H1 (cell line): ENCODE measurements at regions of chr11 and their contacts with region 1.

Region 1: GRCh38 chr11:1796413-1797011 is 32.8 kb upstream of the CTSD start:
- DNase-seq: no peak
- H3K4me3 ChIP-seq: no peak overlapping the region
- H3K27ac ChIP-seq: no peak overlapping the region
- H3K4me1 ChIP-seq: no peaks in the 10 kb centered on the region
- H3K27me3 ChIP-seq: peaks cover 0 to 3% (median 1%) of the 10 kb centered on the region in 4 experiments; a peak in 2 of 7 replicates
- CTCF ChIP-seq: peak; percentile 36 to 65 (median 51)
- EP300 ChIP-seq: no peak
- POLR2A ChIP-seq: no peak
- RAD21 ChIP-seq: peak in 1 of 2 experiments; percentile 12; a peak in 1 of 4 replicates

Region 2: DNA sequence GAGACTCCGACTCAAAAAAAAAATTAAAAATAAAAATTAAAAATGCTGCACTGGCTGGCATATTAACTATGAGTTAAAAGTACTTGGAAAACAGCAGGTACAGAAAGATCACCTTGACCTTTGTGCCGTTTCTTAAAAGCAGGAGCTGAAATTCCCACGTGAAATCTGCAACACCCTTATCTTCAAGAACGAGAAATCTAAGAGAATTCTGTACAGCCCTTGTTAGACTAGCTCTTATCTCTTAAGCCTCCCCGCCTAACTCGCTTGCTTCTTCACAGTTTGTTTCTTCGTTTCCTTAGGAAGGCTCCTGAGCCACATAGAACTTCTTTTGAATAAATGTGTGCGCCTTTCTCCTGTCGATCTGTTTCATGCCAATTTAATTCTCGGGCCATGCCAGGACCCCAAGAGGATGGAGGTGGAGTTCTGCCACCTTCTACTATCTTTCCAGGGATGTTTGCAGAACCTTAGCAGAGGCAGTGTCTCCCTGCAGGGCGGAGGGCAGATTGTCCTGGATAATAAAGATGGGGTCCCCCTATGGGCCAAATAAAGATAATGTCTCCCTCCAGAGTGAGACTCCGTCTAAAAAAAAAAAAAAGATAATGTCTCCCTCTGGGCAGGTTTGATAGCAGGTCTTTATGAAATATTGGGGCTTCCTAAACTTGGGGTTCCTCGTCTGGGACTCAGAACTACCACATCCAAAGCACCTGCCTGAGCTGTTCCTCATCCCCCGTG is 10.9 kb after region 1 on chr11:
- CTCF ChIA-PET with region 1: interaction called, 26 read pairs
- POLR2A ChIA-PET with region 1: interaction called, 3 read pairs
- DNase-seq: no peak
- H3K4me3 ChIP-seq: no peak overlapping the region
- H3K27ac ChIP-seq: no peak overlapping the region
- H3K4me1 ChIP-seq: 0 out of 7 replicates have a peak, but pooled peaks cover 0 to 3% (median 0%) of the 10 kb centered on the region in 4 experiments
- H3K27me3 ChIP-seq: peaks cover 0 to 2% (median 1%) of the 10 kb centered on the region in 4 experiments; a peak in 2 of 7 replicates
- CTCF ChIP-seq: peak in 2 of 3 experiments; percentile 29 to 41; a peak in 3 of 4 replicates
- EP300 ChIP-seq: no peak
- POLR2A ChIP-seq: no peak
- RAD21 ChIP-seq: peak; percentile 6 to 28; a peak in 1 of 4 replicates

Region 3: GRCh38 chr11:1838426-1839171 is 42.1 kb after region 1 on chr11 and contains the start of gene TNNI2:
- CTCF ChIA-PET with region 1: no interaction called
- POLR2A ChIA-PET with region 1: no interaction called
- DNase-seq: no peak
- H3K4me3 ChIP-seq: no peak within 1 kb of the TSS
- H3K27ac ChIP-seq: no peak within 1 kb of the TSS
- H3K4me1 ChIP-seq: no peaks in the 10 kb centered on the region; a peak in 1 of 7 replicates
- H3K27me3 ChIP-seq: no peaks in the 10 kb centered on the region
- CTCF ChIP-seq: no peak
- EP300 ChIP-seq: no peak
- POLR2A ChIP-seq: no peak
- RAD21 ChIP-seq: no peak
- total RNA-seq, gene TNNI2: not detected in 2 replicates

Region 4: DNA sequence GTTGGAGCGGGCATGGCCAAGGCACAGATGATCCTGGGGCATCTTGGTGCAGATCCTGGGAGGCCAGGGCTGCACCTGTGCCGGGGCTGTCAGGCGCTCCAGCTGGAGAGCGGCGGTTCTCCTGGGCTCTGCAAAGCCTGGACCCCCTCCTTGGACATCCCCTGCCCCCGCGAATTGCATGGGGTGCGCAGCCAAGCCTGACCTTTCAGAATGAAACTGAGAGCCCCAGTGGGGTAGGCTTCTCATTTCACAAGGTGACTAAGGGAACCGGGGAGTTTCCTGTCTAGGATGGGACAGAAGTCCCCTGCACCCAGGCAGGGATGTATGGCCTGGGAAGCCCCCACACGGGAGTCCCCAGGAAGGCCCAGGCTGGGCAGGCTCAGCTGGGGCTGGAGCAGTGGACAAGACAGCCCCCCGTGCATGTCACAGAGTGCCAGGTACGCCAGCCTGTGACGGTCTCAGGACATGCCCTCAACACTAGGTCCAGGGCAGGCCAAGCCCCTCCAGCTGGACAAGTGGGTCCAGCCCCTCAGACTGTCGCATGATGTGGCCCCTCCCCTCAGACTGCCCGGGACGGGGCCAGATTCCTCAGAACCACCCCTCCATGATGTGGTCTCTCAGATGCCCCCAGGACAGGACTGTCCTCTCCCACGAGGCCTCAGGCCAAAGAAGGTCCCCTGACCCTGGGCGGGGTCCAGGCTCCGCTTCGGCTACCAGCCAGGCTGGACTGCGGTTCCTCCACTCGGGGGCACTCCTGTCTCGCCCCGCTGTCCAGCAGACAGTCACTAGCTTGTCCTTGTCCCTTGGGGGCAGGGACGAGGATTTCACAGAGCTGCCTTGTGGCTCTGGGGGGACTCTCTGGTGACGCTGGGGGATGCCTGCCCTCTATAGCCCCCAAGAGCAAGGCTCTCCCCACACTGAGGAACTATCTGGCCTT is 58.7 kb after region 1 on chr11:
- CTCF ChIA-PET with region 1: no interaction called
- POLR2A ChIA-PET with region 1: no interaction called
- DNase-seq: no peak
- H3K4me3 ChIP-seq: no peak overlapping the region
- H3K27ac ChIP-seq: no peak overlapping the region
- H3K4me1 ChIP-seq: 0 out of 7 replicates have a peak, but pooled peaks cover 0 to 3% (median 0%) of the 10 kb centered on the region in 4 experiments
- H3K27me3 ChIP-seq: no peaks in the 10 kb centered on the region; a peak in 1 of 7 replicates
- CTCF ChIP-seq: peak in 1 of 3 experiments; percentile 6; a peak in 1 of 4 replicates
- EP300 ChIP-seq: no peak
- POLR2A ChIP-seq: no peak
- RAD21 ChIP-seq: peak; percentile 14 to 35; a peak in 2 of 4 replicates